ENCODE measurements at regions of chr15 and their contacts with region 1.

Region 1: GRCh38 chr15:40440743-40441564 is at the start of gene BAHD1:
- DNase-seq: peak; percentile 97 to 99
- ATAC-seq: peak; percentile 92 to 95 (median 92)
- H3K4me3 ChIP-seq: peak within 1 kb of the TSS; percentile 89
- H3K27ac ChIP-seq: peak within 1 kb of the TSS; percentile 76
- H3K4me1 ChIP-seq: peaks cover 25% of the 10 kb centered on the region
- H3K27me3 ChIP-seq: peaks cover 0 to 25% (median 9%) of the 10 kb centered on the region in 3 donors
- CTCF ChIP-seq: no peak
- total RNA-seq, gene BAHD1: 12.5 to 15.6 (median 13.4) TPM

Region 2: GRCh38 chr15:40506964-40507571 is 66.1 kb after region 1 on chr15:
- intact Hi-C with region 1: loop called (anchors 2 to 5 kb)
- DNase-seq: peak; percentile 75 to 85
- ATAC-seq: peak; percentile 75 to 84 (median 81)
- H3K4me3 ChIP-seq: peak overlapping the region; percentile 57
- H3K27ac ChIP-seq: peak overlapping the region; percentile 21
- H3K4me1 ChIP-seq: peaks cover 16% of the 10 kb centered on the region
- H3K27me3 ChIP-seq: no peaks in the 10 kb centered on the region
- CTCF ChIP-seq: peak; percentile 64